ENCODE measurements at regions of chrX and their contacts with region 1.

Region 1: DNA sequence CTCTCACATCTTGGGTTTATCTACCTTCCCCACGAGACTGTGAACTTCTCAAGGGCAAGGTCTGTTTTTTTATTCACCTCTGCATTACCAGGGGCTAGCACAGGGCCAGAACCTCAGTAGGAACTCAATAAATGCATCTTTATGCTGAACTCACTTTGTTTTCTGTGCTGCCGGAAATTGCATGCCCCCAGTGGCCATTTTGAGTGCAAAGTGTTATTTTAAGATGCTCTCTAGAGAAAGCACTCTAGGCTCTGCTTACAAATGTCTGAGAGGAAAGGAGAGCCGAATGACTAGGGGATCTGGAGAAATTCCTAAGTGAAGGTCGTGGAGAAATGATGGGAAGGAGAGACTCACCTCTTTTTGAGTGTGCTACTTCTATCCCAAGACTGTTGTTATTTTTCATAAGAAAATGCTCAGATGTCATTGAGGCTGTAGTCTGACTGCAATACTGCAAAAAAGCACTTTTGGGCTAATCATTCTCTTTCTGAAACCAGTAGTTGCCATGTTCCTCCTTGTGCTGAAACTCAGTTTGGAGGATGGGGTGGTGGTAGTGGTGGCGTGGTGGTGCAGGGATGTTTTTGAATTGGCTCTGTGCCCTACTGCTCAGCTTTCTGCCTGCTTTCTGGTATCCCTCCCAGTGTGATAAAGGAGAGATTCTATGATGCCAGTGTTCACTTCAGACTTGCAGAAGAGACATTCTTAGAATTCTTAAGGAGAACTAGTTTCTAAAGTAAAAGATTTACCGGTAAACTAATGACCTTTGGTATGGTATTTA is 41.3 kb downstream of the DOCK11 start:
- DNase-seq: peak; percentile 57
- H3K4me3 Mint-ChIP-seq: peak overlapping the region; percentile 48
- H3K27ac Mint-ChIP-seq: peak overlapping the region; percentile 92
- H3K4me1 Mint-ChIP-seq: peaks cover 72% of the 10 kb centered on the region
- H3K27me3 Mint-ChIP-seq: no peaks in the 10 kb centered on the region

Region 2: GRCh38 chrX:117910216-117910615 is 626.7 kb before region 1 on chrX:
- CTCF ChIA-PET with region 1: no interaction called
- intact Hi-C with region 1: no loop called
- DNase-seq: no peak
- H3K4me3 Mint-ChIP-seq: no peak overlapping the region
- H3K27ac Mint-ChIP-seq: no peak overlapping the region
- H3K4me1 Mint-ChIP-seq: no peaks in the 10 kb centered on the region
- H3K27me3 Mint-ChIP-seq: no peaks in the 10 kb centered on the region

Region 3: GRCh38 chrX:118345401-118346257 is 191.2 kb before region 1 on chrX and contains the start of gene WDR44:
- CTCF ChIA-PET with region 1: interaction called, 4 read pairs
- intact Hi-C with region 1: loop called (anchors 2 kb)
- DNase-seq: peak; percentile 94
- H3K4me3 Mint-ChIP-seq: peak within 1 kb of the TSS; percentile 97
- H3K27ac Mint-ChIP-seq: peak within 1 kb of the TSS; percentile 95
- H3K4me1 Mint-ChIP-seq: peaks cover 30% of the 10 kb centered on the region
- H3K27me3 Mint-ChIP-seq: no peaks in the 10 kb centered on the region
- total RNA-seq, gene WDR44: 4.0 to 5.4 TPM

Region 4: DNA sequence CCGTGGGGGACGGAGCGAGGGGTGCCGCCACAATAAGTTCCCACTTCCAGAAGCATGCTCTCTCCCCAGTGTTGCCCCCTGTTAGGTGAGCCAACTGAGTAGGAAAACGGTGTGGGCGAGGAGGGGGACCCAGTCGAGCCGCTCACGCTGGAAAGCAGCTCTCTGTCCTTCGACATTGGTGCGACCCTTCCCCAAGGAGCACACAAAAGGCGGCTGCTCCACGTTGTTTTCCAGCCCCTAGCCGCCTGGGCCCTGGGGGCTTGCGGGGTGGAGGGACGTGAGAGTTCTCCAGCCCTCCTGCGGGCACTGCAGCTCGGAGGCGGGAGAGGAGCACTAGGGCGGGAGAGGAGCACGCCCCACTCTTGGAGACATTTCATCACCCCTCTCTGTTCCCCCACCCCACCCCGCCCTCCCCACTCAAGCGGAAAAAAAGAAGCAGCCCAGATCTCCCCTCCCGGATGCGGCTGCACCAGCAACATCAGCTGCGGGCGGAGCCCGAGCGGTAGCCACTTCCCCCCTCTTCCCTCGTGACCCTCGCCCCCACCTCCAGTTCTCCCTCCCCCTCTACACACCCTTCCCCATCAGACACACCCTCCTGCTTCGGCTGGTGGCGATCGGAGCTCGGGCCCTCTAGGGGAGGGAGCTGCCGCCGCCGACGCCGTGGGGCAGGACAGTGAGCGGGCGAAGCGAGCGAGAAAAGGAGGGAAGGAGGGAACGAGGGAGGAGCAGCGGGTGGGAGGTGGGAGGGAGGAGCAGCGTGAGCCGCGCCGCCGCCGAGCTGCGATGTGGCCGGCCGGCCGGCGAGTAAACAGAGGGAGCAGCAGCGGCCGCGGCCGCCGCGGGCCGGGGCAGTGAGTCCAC is 41.6 kb before region 1 on chrX and contains the start of gene DOCK11:
- CTCF ChIA-PET with region 1: interaction called, 4 read pairs
- intact Hi-C with region 1: loop called (anchors 1 kb)
- DNase-seq: peak; percentile 86
- H3K4me3 Mint-ChIP-seq: peak within 1 kb of the TSS; percentile 97
- H3K27ac Mint-ChIP-seq: peak within 1 kb of the TSS; percentile 96
- H3K4me1 Mint-ChIP-seq: peaks cover 17% of the 10 kb centered on the region
- H3K27me3 Mint-ChIP-seq: no peaks in the 10 kb centered on the region
- total RNA-seq, gene DOCK11: 32.8 to 34.8 TPM

Region 5: DNA sequence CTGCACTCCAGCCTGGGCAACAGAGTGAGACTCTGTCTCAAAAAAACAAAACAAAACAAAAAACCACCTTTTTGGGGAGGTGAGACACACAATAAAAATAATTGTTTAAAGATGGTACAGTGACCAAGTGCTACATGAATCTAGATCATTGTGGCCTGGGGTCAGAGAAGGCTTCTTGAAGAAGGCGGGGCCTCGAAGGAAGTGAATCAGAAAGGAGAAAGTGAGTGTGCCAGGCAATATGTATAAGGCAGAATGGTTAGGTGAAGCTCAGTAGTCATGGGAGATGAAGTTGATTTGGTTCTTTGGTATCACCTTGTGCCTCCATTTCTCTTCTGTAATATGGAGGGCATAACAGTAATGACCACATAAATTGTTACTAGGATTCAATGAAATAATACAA is 17.6 kb after region 1 on chrX:
- CTCF ChIA-PET with region 1: interaction called, 3 read pairs
- intact Hi-C with region 1: loop called (anchors 2 kb)
- DNase-seq: peak; percentile 40
- H3K4me3 Mint-ChIP-seq: no peak overlapping the region
- H3K27ac Mint-ChIP-seq: peak overlapping the region; percentile 84
- H3K4me1 Mint-ChIP-seq: peaks cover 40% of the 10 kb centered on the region
- H3K27me3 Mint-ChIP-seq: no peaks in the 10 kb centered on the region

Region 6: GRCh38 chrX:118571829-118572228 is 35.0 kb after region 1 on chrX:
- CTCF ChIA-PET with region 1: no interaction called
- intact Hi-C with region 1: loop called (anchors 5 kb)
- DNase-seq: no peak
- H3K4me3 Mint-ChIP-seq: no peak overlapping the region
- H3K27ac Mint-ChIP-seq: no peak overlapping the region
- H3K4me1 Mint-ChIP-seq: peaks cover 21% of the 10 kb centered on the region
- H3K27me3 Mint-ChIP-seq: no peaks in the 10 kb centered on the region

Region 7: DNA sequence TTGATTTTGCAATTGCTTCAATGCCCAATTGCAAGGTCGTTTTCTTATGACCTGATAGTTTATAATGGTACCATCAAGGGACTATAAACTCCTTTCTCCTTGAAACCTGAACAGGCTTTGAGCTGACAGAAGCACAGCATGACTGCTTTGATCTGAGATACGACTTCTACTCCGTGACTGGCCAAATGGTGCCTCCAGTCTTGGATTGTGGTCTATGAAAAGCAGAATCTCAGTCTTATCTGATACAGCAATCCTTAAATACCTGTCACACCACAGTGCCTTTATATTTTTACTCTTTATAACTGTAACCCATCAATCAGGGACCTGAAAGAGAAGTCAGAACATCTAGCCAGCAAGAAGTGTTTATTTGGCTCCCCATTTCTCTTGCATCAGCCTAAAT is 51.8 kb after region 1 on chrX:
- CTCF ChIA-PET with region 1: no interaction called
- intact Hi-C with region 1: loop called (anchors 2 kb)
- DNase-seq: no peak
- H3K4me3 Mint-ChIP-seq: no peak overlapping the region
- H3K27ac Mint-ChIP-seq: peak overlapping the region; percentile 69
- H3K4me1 Mint-ChIP-seq: peaks cover 18% of the 10 kb centered on the region
- H3K27me3 Mint-ChIP-seq: no peaks in the 10 kb centered on the region

Region 8: GRCh38 chrX:118872102-118872566 is 335.3 kb after region 1 on chrX:
- CTCF ChIA-PET with region 1: no interaction called
- intact Hi-C with region 1: no loop called
- DNase-seq: no peak
- H3K4me3 Mint-ChIP-seq: no peak overlapping the region
- H3K27ac Mint-ChIP-seq: no peak overlapping the region
- H3K4me1 Mint-ChIP-seq: no peaks in the 10 kb centered on the region
- H3K27me3 Mint-ChIP-seq: no peaks in the 10 kb centered on the region

Region 9: DNA sequence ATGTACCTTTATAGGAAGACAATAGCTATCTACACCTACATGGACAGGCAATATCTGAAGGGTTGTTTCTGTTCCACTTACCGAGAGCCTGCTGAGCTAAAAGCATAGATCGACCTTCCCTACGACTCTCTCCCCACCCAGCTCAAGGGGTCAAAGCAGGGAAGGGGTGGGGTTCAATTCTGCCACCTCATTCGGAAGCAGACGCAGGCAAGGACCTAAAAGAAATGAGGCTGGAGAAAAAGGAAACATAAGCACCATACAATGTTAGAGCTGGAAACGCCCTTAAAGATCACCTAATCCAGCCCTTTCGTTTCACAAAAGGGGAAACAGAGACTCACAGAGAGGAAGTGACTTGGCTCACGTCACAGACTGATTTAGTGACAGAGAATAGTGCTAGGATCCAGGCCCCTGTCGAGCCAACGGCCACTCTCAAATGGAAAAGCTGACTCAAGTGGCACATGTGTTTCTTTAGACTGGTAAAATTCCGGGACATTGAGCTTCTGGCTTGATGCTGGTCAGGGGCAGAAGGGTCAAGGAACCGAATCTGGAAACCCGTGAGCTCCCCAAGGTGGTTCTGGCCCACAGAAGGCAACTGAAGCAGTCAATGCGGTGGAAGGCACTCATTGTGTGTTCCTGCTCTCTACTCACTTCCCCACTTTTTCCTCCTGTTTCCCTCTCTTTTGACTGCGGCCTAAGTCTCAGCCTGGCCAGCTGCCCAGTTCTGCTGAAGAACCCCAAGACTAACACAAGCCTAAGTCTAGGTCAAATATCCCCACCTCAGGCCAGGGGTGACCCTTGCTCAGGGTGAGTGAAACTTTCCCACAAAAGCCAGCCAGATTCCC is 1148.6 kb after region 1 on chrX:
- CTCF ChIA-PET with region 1: no interaction called
- intact Hi-C with region 1: loop called (anchors 10 kb)
- DNase-seq: peak; percentile 80
- H3K4me3 Mint-ChIP-seq: peak overlapping the region; percentile 84
- H3K27ac Mint-ChIP-seq: peak overlapping the region; percentile 100
- H3K4me1 Mint-ChIP-seq: peaks cover 50% of the 10 kb centered on the region
- H3K27me3 Mint-ChIP-seq: no peaks in the 10 kb centered on the region

Measured in activated naive CD4-positive, alpha-beta T cell treated with anti-CD3 and anti-CD28 coated beads for 36 hours (primary cell).